Sciatic nerve (tissue), 2 donors: ENCODE measurements at regions of chr16 and their contacts with region 1.

Region 1: DNA sequence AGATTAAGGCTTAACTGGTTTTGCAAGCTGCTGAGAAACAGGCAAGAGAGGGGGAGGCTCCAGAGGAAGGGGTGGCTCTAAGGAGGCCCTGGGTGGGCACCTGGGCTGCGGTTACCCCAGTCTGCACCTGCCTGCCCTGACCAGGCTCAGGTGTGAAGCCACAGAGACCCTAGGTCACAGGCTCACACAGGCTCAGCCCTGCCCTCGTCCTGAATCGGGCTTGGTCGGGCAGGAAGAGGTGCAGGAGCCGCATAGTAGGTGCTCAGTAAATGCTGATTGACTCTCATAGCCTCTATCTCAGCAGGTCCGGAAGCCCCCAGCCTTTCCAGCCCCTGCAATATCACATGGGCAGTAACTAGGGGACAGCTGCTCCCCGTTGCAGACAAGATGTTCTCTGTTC is 203.4 kb downstream of the GSG1L start:
- DNase-seq: no peak
- ATAC-seq: no peak

Region 2: DNA sequence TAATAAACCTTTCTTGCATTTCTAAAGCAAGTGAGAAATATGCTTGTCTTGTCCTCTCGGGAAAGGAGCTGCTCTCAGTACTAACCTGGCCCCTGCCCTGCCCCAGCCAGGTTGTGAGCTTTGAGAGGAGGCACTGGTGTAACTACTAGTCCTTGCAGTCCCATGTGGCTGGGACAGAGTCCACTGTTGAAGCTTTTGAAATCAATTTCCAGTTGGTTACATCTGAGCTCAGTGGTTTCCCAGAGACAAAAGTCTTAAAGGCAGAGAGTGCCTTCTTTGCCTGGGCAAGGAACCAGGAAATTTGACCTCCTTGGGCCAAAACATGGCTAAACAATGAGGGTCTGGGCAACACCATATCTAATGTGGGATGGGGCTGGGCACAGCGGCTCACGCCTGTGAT is 154.8 kb after region 1 on chr16:
- intact Hi-C with region 1: no loop called
- DNase-seq: no peak
- ATAC-seq: no peak

Region 3: GRCh38 chr16:28237754-28238357 is 377.8 kb after region 1 on chr16:
- intact Hi-C with region 1: loop called (anchors 5 kb)
- DNase-seq: no peak
- ATAC-seq: no peak